ENCODE measurements at regions of chr4 and their contacts with region 1.

Region 1: DNA sequence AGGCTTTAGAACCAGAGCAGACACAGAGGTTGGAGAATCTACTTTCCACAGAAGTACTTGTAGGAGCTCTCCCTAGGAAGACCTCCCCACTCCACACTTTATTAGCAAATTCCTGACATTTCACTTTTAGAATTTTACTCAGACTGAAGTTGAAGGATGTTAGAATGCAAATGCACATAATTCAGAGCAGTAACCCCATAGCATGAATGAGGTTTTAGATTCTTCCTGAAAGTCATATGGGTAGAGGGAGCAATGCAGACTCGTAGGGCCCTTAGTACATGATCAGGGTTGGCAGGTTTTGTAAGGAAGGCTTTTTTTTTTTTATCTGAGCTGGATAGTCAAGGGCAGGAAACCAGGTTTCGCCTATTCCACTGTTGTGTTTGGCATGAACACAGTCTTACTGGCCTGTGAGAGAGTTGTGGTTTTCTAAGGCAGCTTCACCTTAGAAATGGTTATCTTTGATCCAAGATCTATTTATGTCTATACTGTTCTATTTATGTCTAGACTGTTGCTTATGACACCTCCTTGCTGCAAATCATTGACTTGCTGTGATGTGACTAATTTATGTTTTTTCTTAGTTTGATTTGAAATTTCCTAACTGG is 48.9 kb downstream of the SPATA18 start:
- DNase-seq: no peak
- H3K4me3 ChIP-seq: no peak overlapping the region
- H3K27ac ChIP-seq: no peak overlapping the region
- H3K4me1 ChIP-seq: no peaks in the 10 kb centered on the region
- H3K27me3 ChIP-seq: no peaks in the 10 kb centered on the region
- CTCF ChIP-seq: no peak

Region 2: GRCh38 chr4:52051619-52052474 is 48.1 kb before region 1 on chr4:
- CTCF ChIA-PET with region 1: no interaction called
- POLR2A ChIA-PET with region 1: no interaction called
- intact Hi-C with region 1: loop called (anchors 5 kb)
- DNase-seq: peak; percentile 54
- H3K4me3 ChIP-seq: peak overlapping the region; percentile 44
- H3K27ac ChIP-seq: no peak overlapping the region
- H3K4me1 ChIP-seq: no peaks in the 10 kb centered on the region
- H3K27me3 ChIP-seq: peaks cover 3% of the 10 kb centered on the region
- CTCF ChIP-seq: no peak